ENCODE measurements at regions of chr6 and their contacts with region 1.

Region 1: DNA sequence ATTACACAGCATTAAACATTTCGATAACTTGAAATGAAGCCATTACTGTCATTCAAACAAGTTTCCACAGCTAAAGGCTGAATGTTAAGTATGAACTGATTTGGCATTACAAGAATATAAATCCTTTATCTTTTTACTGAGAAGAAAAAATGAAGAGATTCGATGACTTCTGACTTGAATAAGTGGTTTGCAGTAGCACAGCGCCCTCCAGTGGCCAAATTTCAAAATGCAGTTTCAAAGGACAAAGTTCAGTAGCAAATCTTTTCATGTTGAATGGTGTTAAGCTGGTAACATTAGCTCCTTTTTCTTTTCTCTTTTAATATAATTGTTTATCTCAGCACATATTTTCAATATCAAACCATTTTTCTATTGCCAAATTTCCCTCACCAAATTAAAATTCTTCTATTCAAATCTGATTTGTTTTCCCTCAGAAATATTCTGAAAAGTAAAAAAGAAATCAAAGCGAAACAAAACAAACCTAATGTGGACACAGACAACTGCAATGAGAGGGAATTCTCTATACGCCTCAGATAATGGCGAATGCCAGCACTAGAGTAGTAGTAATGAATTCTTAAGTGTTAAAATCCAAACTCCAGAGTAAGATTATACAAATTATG is 145.7 kb downstream of the BTBD9 start:
- DNase-seq: no peak
- H3K4me3 ChIP-seq: no peak overlapping the region
- CTCF ChIP-seq: peak; percentile 59

Region 2: GRCh38 chr6:37705239-37706051 is 788.6 kb before region 1 on chr6:
- CTCF ChIA-PET with region 1: interaction called, 14 read pairs
- POLR2A ChIA-PET with region 1: no interaction called
- DNase-seq: no peak
- H3K4me3 ChIP-seq: peak overlapping the region; percentile 51
- CTCF ChIP-seq: peak; percentile 74

Region 3: DNA sequence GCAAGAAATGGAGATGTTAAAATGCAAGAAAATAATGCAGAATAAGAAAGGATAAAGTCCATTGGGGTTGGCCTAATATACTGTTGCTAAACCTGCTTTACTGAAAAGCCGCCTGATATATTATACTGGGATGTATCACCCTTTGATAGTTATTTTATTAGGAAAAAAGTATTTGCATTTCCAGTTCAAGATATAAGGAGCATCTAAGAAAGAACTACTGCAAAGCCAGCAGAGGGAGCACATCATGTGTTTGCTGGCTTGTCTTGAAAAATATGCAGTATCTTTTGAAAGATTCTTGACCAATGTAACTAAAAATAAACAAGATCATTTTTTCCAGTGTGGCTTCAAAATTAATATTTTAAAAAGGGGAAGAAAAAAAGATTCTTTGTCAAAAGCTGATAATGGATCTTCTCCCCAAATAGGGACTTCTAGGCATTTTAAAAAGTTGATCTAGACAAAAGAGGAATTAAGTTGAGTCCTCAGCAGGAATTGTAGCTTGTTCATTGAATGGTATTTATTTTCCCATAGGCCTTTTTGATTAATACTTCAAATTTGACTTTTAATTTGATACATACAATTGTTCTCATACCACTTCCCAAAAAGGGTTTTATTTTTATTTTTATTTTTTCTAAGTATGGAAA is 459.6 kb before region 1 on chr6:
- CTCF ChIA-PET with region 1: interaction called, 35 read pairs
- POLR2A ChIA-PET with region 1: no interaction called
- DNase-seq: no peak
- H3K4me3 ChIP-seq: no peak overlapping the region
- CTCF ChIP-seq: peak; percentile 61

Region 4: GRCh38 chr6:38176797-38177751 is 317.0 kb before region 1 on chr6:
- CTCF ChIA-PET with region 1: interaction called, 15 read pairs
- POLR2A ChIA-PET with region 1: no interaction called
- DNase-seq: no peak
- H3K4me3 ChIP-seq: no peak overlapping the region
- CTCF ChIP-seq: no peak

Region 5: DNA sequence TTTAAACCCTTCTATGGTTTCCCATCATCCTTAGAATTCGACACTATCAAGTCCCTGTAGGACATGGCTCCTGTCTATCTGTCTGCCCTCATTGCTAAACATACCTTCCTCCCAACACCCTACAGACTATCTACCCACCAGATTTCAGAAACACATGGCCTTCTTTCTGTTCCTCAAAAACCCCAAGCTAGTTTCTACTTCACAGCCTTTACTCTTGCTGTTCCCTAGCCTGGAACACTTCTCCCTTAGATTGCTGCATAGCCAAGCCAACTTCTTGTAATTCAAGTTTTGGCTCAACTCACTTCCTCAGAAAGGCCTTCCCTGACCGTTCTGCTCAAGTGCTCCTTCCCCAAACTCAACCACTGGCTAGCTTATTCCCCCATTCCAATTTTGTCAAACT is 10.5 kb before region 1 on chr6:
- CTCF ChIA-PET with region 1: interaction called, 40 read pairs
- POLR2A ChIA-PET with region 1: no interaction called
- DNase-seq: no peak
- H3K4me3 ChIP-seq: no peak overlapping the region
- CTCF ChIP-seq: no peak

Region 6: DNA sequence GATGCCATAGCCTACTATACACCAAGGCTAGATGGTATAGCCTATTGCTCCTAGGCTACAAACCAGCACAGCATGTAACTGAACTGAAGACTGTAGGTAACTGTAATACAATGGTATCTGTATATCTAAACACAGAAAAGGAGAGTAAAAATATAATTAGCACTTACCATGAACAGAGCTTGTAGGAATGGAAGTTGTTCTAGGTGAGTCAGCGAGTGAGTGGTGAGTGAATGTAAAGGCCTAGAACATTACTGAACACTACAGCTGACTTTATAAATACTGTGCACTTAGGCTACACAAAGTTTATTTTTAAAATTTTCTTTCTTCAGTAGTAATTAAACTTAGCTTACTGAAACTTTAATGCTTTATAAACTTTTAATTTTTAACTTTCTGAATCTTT is 16.2 kb after region 1 on chr6:
- CTCF ChIA-PET with region 1: interaction called, 11 read pairs
- POLR2A ChIA-PET with region 1: no interaction called
- DNase-seq: no peak
- H3K4me3 ChIP-seq: no peak overlapping the region
- CTCF ChIP-seq: no peak

Region 7: DNA sequence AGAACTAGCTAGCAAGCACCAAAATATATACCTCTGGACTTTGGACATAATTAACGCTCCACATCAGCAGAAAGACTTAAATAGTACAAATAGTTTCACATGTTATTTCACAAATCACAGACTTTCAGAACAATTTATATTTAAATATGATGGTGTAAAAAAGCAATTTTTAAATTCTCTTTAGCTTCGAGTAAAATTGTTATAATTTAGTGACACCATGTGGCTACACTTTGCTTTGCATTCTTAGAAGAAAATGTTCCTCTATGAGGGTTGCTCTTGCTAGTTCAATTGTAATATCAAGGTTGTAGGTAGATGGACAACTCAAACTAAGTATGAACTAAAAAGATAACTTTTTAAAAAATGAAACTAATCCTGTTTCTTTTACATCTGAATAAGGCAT is 76.7 kb after region 1 on chr6:
- CTCF ChIA-PET with region 1: interaction called, 12 read pairs
- POLR2A ChIA-PET with region 1: no interaction called
- DNase-seq: no peak
- H3K4me3 ChIP-seq: no peak overlapping the region
- CTCF ChIP-seq: peak; percentile 7

Region 8: DNA sequence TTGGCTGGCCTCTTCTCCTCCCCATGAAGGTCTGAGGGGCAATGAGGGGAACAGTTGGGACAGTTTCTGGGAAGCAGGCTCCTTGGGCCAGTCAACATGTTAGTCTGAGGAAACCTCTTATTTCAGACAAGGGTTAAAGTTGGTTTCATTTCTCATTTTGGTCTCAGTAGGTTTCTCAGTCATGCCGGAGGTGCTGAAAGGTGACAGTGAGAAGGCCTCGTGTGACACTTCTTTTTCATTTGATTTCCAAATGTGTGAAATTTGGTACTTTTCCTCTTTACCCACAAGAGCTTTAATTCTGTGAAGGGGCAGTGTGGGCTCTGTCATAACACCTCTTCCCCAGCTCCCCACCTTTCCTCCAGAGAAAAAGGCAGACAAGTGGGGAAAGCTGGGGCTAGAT is 547.0 kb after region 1 on chr6:
- CTCF ChIA-PET with region 1: no interaction called
- POLR2A ChIA-PET with region 1: no interaction called
- DNase-seq: no peak
- H3K4me3 ChIP-seq: no peak overlapping the region
- CTCF ChIP-seq: no peak